ENCODE measurements at regions of chr14 and their contacts with region 1.

Region 1: GRCh38 chr14:59028476-59029202 is 159.8 kb upstream of the DAAM1 start:
- DNase-seq: peak; percentile 100
- ATAC-seq: peak; percentile 98
- H3K4me3 ChIP-seq: peak overlapping the region; percentile 8; the same call in 1 of the 2 replicates
- H3K27ac ChIP-seq: no peak overlapping the region
- H3K4me1 ChIP-seq: peaks cover 16% of the 10 kb centered on the region
- H3K27me3 ChIP-seq: peaks cover 27% of the 10 kb centered on the region
- CTCF ChIP-seq: peak; percentile 100

Region 2: GRCh38 chr14:58731465-58732330 is 296.9 kb before region 1 on chr14:
- CTCF ChIA-PET with region 1: no interaction called
- POLR2A ChIA-PET with region 1: no interaction called
- intact Hi-C with region 1: loop called (anchors 2 kb)
- DNase-seq: peak; percentile 100
- ATAC-seq: peak; percentile 94
- H3K4me3 ChIP-seq: peak overlapping the region; percentile 1; the same call in 1 of the 2 replicates
- H3K27ac ChIP-seq: peak overlapping the region; percentile 85
- H3K4me1 ChIP-seq: peaks cover 31% of the 10 kb centered on the region
- H3K27me3 ChIP-seq: no peaks in the 10 kb centered on the region
- CTCF ChIP-seq: no peak

Region 3: GRCh38 chr14:58994130-58994529 is 34.5 kb before region 1 on chr14:
- CTCF ChIA-PET with region 1: no interaction called
- POLR2A ChIA-PET with region 1: no interaction called
- intact Hi-C with region 1: no loop called
- DNase-seq: no peak
- ATAC-seq: no peak
- H3K4me3 ChIP-seq: no peak overlapping the region
- H3K27ac ChIP-seq: no peak overlapping the region
- H3K4me1 ChIP-seq: no peaks in the 10 kb centered on the region
- H3K27me3 ChIP-seq: peaks cover 25% of the 10 kb centered on the region
- CTCF ChIP-seq: no peak

Region 4: GRCh38 chr14:59055439-59056045 is 26.9 kb after region 1 on chr14:
- CTCF ChIA-PET with region 1: interaction called, 6 read pairs
- POLR2A ChIA-PET with region 1: no interaction called
- intact Hi-C with region 1: loop called (anchors 1 kb)
- DNase-seq: peak; percentile 92
- ATAC-seq: peak; percentile 99
- H3K4me3 ChIP-seq: no peak overlapping the region
- H3K27ac ChIP-seq: no peak overlapping the region
- H3K4me1 ChIP-seq: no peaks in the 10 kb centered on the region
- H3K27me3 ChIP-seq: peaks cover 20% of the 10 kb centered on the region
- CTCF ChIP-seq: peak; percentile 100

Region 5: DNA sequence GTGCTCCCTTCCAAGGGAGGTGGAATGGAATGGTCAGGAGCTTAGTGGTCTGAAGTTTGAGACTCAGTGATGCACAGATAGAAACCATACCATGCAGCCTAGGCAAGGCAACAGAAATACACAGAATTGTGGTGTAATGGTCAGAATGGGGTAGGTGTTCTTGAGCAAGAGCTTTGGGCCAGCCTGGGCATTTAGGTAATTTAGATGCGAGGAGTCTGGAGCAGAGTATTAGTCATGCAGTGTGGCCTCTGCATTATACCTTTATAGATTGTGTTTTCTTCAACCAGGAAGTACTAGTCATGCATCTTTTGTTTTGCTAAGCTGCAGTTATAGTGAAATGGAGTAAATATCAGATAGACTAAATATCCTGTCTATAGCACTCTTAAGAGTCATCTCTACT is 278.1 kb after region 1 on chr14:
- CTCF ChIA-PET with region 1: interaction called, 4 read pairs
- POLR2A ChIA-PET with region 1: no interaction called
- intact Hi-C with region 1: loop called (anchors 5 kb)
- DNase-seq: peak; percentile 99
- ATAC-seq: peak; percentile 91
- H3K4me3 ChIP-seq: peak overlapping the region; percentile 3; the same call in 1 of the 2 replicates
- H3K27ac ChIP-seq: peak overlapping the region; percentile 39
- H3K4me1 ChIP-seq: peaks cover 49% of the 10 kb centered on the region
- H3K27me3 ChIP-seq: no peaks in the 10 kb centered on the region
- CTCF ChIP-seq: no peak

Region 6: DNA sequence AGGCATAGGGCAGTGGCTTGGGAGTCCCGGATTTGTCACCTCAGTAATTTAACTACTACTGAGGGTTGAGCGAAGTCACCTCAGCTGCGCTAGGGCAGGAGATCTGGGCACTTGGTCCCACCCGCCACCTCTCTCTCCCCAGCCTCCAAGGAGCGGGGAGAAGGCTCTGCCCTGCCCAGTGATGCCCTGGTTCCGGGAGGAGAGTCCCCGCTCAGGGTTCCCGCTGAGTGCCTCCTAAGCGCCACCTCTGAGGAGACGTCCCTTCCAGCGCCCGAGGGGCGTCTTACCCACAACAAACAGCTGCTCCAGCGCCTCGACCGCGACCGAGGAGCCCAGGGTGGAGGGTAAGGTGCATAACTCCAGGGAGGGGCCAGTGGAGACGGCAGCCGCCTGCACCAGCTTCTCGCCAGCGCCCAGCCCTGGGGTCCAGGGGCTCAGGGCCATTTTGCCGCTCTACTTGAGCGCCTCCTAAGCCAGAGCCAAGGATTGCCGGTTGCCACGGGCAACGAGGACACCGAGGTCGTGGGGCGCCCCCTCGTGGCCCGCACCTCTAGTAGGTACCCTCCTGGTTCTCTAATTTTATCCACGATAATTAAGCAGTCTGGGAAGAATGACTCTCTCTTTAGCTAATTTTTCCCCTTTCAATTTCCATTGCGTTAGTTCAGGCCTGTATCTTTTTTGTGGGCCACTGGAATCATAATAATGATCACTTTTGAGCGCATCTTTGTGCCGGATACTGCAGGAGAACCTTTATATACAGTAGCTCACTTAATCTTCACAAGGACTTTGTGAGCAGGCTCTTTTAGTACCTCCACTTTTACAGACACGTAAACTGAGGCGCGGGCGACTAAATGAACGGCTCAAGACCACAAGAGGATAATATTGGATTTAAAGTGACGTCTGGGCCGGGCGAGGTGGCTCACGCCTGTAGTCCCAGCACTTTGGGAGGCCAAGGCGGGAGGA is 548.0 kb after region 1 on chr14 and contains the start of gene CCDC175:
- CTCF ChIA-PET with region 1: no interaction called
- POLR2A ChIA-PET with region 1: no interaction called
- intact Hi-C with region 1: loop called (anchors 10 kb)
- DNase-seq: peak; percentile 98
- ATAC-seq: peak; percentile 97
- H3K4me3 ChIP-seq: peak within 1 kb of the TSS; percentile 62
- H3K27ac ChIP-seq: no peak within 1 kb of the TSS
- H3K4me1 ChIP-seq: peaks cover 6% of the 10 kb centered on the region
- H3K27me3 ChIP-seq: peaks cover 63% of the 10 kb centered on the region
- CTCF ChIP-seq: peak; percentile 100
- total RNA-seq, gene CCDC175: not detected in 2 replicates

Measured in PC-3 (cell line).